Motor neuron (in vitro differentiated cells): ENCODE measurements at regions of chr14 and their contacts with region 1.

Region 1: GRCh38 chr14:64764641-64765520 is 60.7 kb downstream of the PLEKHG3 start:
- ATAC-seq: peak; percentile 33 to 83 (median 79)
- H3K4me3 ChIP-seq: peak overlapping the region in 3 of 5 donors; percentile 9 to 12 (median 11)
- H3K27ac ChIP-seq: peak overlapping the region in 1 of 2 donors; percentile 16
- H3K4me1 ChIP-seq: peaks cover 23 to 36% of the 10 kb centered on the region in 2 donors

Region 2: DNA sequence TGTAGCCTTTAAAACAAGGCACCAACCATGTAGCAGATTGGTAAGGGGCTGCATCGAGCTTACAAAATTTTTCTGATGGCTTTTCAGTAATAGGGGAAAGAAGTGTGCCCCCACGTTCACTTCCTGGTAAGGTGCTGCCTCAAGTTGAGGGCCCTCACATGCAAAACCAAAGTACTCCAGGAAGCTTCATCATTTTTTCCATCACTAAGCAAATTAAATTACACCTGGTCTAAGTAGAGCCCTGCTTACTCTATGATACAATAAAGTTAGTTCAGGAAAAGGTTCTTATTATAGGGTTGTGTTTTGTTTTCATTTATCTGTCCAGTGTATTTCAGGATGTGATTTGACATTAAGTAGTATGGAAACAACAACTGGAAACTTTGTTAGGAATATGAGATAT is 314.6 kb before region 1 on chr14:
- in situ Hi-C with region 1: no loop called
- ATAC-seq: no peak
- H3K4me3 ChIP-seq: no peak overlapping the region
- H3K27ac ChIP-seq: no peak overlapping the region
- H3K4me1 ChIP-seq: peaks cover 5 to 12% of the 10 kb centered on the region in 2 donors

Region 3: GRCh38 chr14:64671591-64671990 is 93.3 kb before region 1 on chr14:
- in situ Hi-C with region 1: loop called in 3 of 9 experiments (anchors 10 to 25 kb)
- ATAC-seq: peak in 7 of 8 experiments; percentile 37 to 77 (median 50)
- H3K4me3 ChIP-seq: no peak overlapping the region
- H3K27ac ChIP-seq: no peak overlapping the region
- H3K4me1 ChIP-seq: peaks cover 0 to 3% of the 10 kb centered on the region in 2 donors